Posterior vena cava (tissue), 2 donors: ENCODE measurements at regions of chr17 and their contacts with region 1.

Region 1: DNA sequence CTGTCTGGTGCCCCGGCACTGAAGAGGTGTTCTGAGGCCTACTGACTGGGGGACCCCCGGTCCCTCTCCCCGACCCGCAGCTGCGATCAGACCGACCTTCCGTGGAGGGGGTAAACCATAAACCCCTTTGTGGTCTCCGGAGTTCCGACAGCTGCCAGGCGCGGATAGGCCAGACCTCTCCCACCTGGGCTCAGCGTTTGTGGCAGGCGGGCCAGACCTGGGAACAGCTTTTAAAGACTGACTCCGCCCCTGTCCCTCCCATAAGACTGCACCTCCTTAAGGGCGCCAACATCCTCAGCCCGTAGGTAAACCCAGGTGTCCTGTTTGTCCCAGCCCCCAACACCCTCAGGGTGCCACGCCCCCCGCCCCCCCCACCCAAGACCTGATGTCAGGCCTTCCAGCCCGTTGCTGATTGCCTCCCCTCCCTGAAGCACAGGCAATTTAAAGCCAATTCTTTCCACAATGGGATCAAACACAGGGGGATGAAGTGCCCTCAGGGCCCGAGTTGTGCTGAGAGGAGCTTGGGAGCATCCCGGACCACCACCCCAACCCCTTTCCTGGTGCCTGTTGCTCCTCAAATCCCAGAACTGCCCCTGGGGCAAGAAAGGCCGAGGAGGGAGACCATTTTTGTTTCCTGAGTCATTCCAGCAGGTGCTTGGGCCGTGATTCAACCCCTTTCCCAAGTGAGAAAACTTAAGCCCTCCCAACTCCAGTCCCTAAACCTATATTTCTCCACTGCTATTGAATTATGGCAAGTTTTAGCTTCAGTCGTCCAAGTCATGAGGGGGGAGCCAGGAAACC is at the start of gene SOX15:
- DNase-seq: peak; percentile 77
- total RNA-seq, gene SOX15: 2.1 to 2.5 TPM

Region 2: DNA sequence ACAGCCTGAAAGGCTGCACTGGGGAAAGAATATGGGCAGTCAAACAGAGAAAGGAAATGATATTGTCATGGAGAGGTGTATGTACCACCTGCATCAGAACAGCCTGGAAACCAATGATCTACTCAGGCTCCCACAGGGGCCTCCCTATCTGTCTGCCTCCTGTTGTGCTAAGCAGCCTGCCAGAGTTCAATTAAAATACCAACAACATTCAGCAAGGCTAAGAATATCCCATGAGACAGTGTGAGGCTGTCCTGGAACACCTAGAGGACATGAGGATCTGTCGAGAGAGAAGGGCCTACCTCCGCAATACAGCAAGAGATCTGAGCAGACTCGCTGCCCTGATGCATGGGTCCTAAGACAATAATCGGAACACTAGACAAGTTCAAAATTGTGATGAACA is 16.2 kb after region 1 on chr17:
- intact Hi-C with region 1: loop called in 1 of 2 experiments (anchors 2 kb)
- DNase-seq: no peak